Activated naive CD8-positive, alpha-beta T cell treated with anti-CD3 and anti-CD28 coated beads, Interleukin-2, amount 10 ng/mL, durations not matched to agents 7 days and 5 days (primary cell): ENCODE measurements at regions of chr1 and their contacts with region 1.

Region 1: DNA sequence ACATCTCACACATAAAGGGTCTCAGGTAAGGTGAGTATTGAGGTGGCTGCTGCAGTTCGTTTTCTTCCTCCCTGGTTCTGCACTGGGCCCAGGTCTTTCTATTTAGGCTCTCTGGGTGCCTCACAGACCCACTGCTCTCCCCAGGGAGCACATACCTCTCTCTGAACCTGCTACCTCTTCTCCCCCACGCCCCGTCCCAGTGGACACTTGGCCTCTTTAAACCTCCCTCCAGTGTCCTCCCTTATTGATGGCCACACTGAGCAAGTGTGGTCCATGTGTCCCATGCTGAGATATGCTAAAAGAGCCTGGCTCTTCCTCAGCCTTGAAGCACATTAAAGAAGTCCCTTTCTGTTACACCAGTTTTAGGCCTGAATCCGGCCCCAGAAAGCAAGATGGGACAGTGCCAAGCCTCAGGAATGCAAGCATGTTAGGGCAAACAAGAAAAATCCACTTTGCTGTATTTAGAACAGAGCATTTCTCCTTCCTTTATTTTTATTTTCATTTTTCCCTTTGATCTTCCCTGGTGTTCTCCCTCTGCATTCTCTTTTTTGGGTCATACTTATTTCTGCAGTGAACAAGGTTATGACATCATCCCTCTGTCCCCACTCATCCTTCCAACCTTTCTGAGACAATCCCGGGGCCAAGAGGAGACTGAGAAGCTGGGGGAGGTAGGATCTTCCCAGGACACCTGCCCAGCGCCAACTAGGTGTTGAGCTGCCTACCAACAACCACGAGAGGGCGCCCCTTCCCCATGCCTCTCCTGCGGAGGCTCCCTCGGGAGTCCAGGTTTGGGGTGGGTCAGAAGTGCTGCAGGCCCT is 5.0 kb upstream of the CHI3L2 start:
- DNase-seq: peak; percentile 79
- ATAC-seq: peak; percentile 2
- H3K4me3 Mint-ChIP-seq: peak overlapping the region; percentile 72
- H3K27ac Mint-ChIP-seq: peak overlapping the region; percentile 91
- H3K4me1 Mint-ChIP-seq: peaks cover 84% of the 10 kb centered on the region
- H3K27me3 Mint-ChIP-seq: no peaks in the 10 kb centered on the region

Region 2: DNA sequence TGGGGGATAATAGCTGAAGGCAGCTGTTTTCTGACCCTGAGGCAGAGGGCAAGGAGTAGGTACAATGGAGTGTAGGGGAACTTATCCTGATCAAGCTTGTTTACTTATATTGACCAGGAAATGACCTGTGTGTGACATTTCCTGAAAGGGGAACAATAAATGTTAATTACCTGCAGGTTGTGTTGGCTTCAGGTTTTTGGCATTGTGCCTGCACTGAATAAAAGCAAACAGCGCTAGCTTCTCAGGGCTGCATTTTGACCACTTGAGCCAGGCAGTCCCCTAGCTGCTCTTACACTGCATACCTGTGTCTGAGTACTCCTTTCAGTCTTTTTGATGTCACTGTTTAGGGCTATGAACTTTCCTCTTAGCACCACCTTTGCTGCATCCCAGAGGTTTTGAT is 123.2 kb before region 1 on chr1:
- POLR2A ChIA-PET with region 1: no interaction called
- DNase-seq: no peak
- ATAC-seq: no peak
- H3K4me3 Mint-ChIP-seq: no peak overlapping the region
- H3K27ac Mint-ChIP-seq: no peak overlapping the region
- H3K4me1 Mint-ChIP-seq: no peaks in the 10 kb centered on the region
- H3K27me3 Mint-ChIP-seq: no peaks in the 10 kb centered on the region

Region 3: DNA sequence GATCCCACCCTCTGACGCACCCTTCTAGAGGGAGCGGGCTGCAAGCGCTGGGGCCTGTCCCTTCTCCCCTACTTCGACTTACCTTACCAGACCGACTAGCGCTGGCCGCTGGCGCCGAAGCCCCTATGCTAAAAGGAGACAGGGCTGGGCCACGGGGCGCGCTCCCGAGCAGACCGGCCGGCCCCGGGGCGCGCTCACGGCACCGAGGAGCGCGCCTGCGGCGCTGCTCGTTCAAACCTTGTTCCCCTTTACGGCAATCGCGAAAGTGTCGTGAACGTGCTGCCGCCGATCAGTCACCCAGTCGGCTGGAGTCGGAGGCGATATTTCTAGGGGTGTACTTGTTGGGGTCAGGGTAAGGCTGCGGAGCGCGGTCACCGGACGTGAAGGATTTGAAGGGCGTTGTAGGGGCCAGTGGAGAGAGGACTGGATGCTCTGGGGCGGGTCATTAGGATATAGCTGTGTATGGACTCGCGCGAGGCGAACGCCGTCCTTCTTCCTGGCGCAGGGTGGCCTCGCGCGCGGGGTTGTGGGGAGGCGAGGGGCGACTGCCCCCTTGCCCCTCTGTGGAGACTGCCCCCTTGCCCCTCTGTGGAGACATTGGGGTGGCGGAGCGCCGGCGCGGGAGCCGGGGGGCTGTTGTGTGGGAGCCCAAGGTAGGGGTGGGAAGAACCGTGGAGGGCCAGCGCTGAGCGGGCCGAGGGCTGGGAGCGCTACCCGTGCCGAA is 82.4 kb before region 1 on chr1 and contains the starts of genes CEPT1 and DRAM2:
- POLR2A ChIA-PET with region 1: interaction called, 16 read pairs
- DNase-seq: peak; percentile 90
- ATAC-seq: peak; percentile 73
- H3K4me3 Mint-ChIP-seq: peak within 1 kb of the TSS; percentile 100
- H3K27ac Mint-ChIP-seq: peak within 1 kb of the TSS; percentile 99
- H3K4me1 Mint-ChIP-seq: peaks cover 35% of the 10 kb centered on the region
- H3K27me3 Mint-ChIP-seq: no peaks in the 10 kb centered on the region
- total RNA-seq, gene CEPT1: 44.1 to 46.5 TPM
- total RNA-seq, gene DRAM2: 36.7 to 37.1 TPM

Region 4: DNA sequence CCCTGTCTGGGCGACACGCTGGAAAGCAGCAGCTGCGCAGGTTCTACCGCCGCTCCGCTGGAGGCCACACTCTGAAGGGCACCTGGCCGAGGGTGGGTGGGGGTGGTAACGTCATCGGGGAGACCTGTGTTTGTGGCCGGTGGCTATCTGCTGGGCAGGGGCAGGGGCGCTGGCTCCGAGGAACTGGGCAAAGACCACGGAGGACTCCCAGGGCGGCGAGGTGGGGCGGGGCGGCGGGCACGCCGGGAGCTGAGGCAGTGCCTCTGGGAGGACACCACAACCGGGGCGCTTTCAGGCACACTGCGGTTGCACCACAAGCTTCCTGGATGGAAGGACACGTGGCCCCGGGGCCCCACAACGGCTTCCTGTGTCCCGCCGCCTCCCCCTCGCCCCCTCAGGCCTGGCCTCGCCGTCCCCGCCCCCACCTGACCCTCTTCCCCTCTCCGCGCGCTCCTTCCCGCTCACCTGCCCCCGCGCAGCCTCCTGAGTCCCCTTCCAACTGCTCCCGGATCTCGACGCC is 18.8 kb before region 1 on chr1:
- POLR2A ChIA-PET with region 1: interaction called, 948 read pairs
- DNase-seq: peak; percentile 89
- ATAC-seq: peak; percentile 26
- H3K4me3 Mint-ChIP-seq: peak overlapping the region; percentile 98
- H3K27ac Mint-ChIP-seq: peak overlapping the region; percentile 91
- H3K4me1 Mint-ChIP-seq: peaks cover 46% of the 10 kb centered on the region
- H3K27me3 Mint-ChIP-seq: no peaks in the 10 kb centered on the region

Region 5: DNA sequence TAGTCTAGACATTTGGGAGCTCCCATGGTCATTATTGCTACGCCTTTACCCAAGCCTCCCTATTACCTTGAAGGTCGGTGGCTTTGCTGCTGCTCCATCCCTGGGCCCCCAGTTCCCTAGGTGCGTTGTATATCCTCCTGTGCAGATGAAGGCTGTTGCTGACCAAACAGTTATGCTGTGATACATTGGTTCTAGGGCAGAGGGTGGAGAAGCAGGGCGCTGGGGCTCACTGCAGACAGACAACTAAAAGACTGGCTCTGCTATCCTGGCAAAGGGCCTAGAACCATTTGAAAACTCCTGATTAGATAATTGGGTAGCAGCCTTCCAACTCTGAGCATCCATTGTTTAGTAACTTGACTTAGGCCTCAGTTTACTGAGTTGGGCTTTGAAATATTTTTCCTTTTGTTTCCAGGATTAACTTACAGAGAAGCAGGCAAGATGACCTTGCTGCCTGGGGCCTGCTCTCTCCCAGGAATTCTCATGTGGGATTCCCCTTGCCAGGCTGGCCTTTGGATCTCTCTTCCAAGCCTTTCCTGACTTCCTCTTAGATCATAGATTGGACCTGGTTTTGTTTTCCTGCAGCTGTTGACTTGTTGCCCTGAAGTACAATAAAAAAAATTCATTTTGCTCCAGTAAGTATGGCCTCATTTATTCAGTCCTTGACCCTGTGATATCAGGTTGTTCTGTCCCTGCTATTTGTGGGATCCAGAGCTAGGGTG is 20.4 kb after region 1 on chr1:
- POLR2A ChIA-PET with region 1: no interaction called
- DNase-seq: no peak
- ATAC-seq: no peak
- H3K4me3 Mint-ChIP-seq: no peak overlapping the region
- H3K27ac Mint-ChIP-seq: no peak overlapping the region
- H3K4me1 Mint-ChIP-seq: no peaks in the 10 kb centered on the region
- H3K27me3 Mint-ChIP-seq: no peaks in the 10 kb centered on the region

Region 6: DNA sequence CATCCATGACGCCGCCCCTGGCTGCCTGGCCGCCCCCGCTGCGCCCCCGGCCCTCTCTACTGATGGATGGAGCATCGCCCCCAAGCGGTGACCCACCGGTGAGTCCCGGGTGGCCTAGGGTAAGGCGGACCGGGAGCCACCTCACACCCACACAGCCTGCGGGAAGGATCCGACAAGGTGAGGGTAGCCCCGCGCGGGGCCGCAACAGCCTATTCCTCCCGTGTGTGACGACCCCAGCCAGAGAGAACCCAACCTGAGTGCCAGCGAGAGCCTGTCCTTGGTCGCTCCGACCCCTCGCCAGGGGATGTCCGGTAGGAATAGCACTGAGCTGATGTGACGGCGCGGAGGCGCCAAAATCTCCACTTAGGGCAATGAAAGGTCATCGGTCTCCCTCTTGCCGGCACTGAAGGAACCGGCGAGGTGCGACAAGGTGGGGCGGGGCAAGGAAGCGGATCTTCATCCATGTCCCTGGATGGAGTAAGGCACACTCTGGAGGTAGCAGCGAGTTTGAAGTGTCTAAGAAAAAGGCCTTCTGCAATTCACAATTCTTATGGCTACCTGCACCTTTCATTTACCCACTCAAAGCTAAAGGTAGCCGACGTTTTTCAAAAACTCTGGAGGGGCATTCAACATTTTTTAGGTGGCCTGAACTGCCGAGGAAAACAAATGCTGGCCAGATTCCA is 48.4 kb after region 1 on chr1:
- POLR2A ChIA-PET with region 1: no interaction called
- DNase-seq: peak; percentile 36
- ATAC-seq: peak; percentile 54
- H3K4me3 Mint-ChIP-seq: peak overlapping the region; percentile 59
- H3K27ac Mint-ChIP-seq: no peak overlapping the region
- H3K4me1 Mint-ChIP-seq: peaks cover 8% of the 10 kb centered on the region
- H3K27me3 Mint-ChIP-seq: peaks cover 25% of the 10 kb centered on the region

Region 7: DNA sequence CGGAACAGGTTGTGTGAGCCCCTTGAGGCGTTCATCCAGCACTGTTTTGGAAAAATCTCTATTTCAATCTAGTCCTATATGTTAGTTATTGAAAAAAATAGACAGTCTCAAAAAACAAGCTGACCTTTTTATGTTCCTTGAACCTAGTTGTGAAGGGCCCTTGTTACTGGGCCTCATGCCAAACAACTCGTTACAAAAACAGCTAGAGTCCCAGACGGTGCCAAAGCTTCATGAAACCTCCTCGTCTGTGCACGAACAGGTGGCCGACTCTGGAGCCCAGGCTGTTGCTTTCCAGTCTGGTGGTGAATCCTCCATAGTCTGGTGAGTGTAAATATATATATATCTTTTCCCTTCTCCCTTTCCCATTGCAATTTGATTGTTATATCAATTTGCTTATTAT is 68.1 kb after region 1 on chr1 and contains the start of gene CHIA:
- POLR2A ChIA-PET with region 1: no interaction called
- DNase-seq: no peak
- ATAC-seq: no peak
- H3K4me3 Mint-ChIP-seq: no peak within 1 kb of the TSS
- H3K27ac Mint-ChIP-seq: no peak within 1 kb of the TSS
- H3K4me1 Mint-ChIP-seq: no peaks in the 10 kb centered on the region
- H3K27me3 Mint-ChIP-seq: no peaks in the 10 kb centered on the region
- total RNA-seq, gene CHIA: not detected